ENCODE measurements at regions of chr13 and their contacts with region 1.

Region 1: GRCh38 chr13:43994999-43995859 is 115.5 kb downstream of the LACC1 start:
- DNase-seq: no peak
- H3K4me3 ChIP-seq: no peak overlapping the region
- H3K27ac ChIP-seq: no peak overlapping the region
- H3K4me1 ChIP-seq: no peaks in the 10 kb centered on the region
- H3K27me3 ChIP-seq: no peaks in the 10 kb centered on the region
- CTCF ChIP-seq: no peak
- POLR2A ChIP-seq: no peak

Region 2: GRCh38 chr13:42959615-42960014 is 1035.6 kb before region 1 on chr13:
- intact Hi-C with region 1: no loop called
- DNase-seq: no peak
- H3K4me3 ChIP-seq: no peak overlapping the region
- H3K27ac ChIP-seq: no peak overlapping the region
- H3K4me1 ChIP-seq: no peaks in the 10 kb centered on the region
- H3K27me3 ChIP-seq: no peaks in the 10 kb centered on the region
- CTCF ChIP-seq: no peak
- POLR2A ChIP-seq: no peak

Region 3: DNA sequence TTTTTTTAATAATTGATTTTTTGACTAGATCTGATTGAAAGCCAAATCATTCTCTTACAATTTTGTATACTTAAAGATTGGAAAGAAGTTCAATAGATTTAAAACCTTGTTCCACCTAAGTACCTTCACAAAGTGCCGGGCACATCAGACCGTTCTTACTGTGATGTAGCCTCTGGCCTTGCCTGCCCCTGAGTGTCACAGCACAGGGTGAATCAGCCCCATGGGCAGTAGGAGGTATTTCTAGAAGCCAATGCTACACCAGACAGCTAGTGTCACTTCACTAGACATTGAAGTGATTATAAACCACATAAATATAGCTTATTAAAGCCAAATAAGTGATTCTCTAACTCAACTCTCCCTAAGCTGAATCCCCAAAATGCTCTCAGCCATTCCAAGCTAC is 15.8 kb after region 1 on chr13:
- intact Hi-C with region 1: loop called (anchors 1 kb)
- DNase-seq: no peak
- H3K4me3 ChIP-seq: no peak overlapping the region
- H3K27ac ChIP-seq: no peak overlapping the region
- H3K4me1 ChIP-seq: no peaks in the 10 kb centered on the region
- H3K27me3 ChIP-seq: no peaks in the 10 kb centered on the region
- CTCF ChIP-seq: no peak
- POLR2A ChIP-seq: no peak

Region 4: DNA sequence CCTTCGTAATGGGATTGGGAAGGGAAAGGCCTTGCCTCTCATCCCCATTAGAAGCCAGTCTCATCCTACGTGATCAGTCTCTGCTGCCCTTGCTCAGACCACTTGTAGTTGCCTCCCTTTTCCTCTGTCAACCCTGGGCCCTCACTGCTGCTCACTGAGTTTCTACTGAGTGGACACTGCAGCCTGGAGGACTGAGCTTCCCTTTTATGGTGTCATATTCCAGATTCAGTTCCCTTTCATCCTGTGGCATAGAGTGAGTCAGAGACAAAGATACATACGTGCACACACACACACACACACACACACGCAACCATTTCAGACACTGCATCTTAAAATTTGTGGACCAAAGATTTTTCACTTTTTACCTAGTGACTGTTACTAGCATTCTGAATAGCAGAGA is 1526.1 kb after region 1 on chr13:
- intact Hi-C with region 1: no loop called
- DNase-seq: no peak
- H3K4me3 ChIP-seq: no peak overlapping the region
- H3K27ac ChIP-seq: no peak overlapping the region
- H3K4me1 ChIP-seq: no peaks in the 10 kb centered on the region
- H3K27me3 ChIP-seq: no peaks in the 10 kb centered on the region
- CTCF ChIP-seq: no peak
- POLR2A ChIP-seq: no peak